Activated CD4-positive, alpha-beta T cell treated with anti-CD3 and anti-CD28 coated beads, Interleukin-2, amount 10 ng/mL, durations not matched to agents 24 days and 14 days (primary cell): ENCODE measurements at regions of chr19 and their contacts with region 1.

Region 1: DNA sequence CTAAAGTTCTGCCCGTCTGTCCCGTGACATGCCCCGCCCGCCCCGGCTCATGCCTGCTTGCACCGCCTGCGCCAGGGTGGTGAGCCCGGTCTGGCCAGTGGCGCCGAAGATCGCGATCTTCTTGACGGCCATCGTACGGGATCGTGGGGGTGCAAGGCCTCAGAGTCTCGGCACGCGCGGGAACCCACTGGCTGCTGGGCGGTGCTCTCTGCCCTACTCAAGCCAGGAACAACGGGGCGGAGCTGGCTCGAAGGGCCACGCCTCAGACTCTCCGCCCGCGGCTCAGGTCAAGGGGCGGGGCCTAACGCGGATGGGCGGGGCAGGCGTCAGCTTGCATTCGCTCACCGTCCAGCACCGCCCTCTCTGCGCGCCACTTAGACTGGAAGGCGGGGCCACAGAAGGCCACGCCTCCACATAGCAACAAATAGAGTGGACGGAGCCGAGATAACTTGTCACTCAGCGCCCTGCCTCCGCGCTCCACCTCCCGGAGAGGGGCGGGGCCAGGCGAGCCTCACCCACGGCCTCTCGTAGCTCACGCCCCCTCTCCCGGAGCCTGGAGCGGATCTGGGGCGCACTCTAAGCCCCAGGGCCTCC is at the start of gene BLVRB:
- DNase-seq: peak; percentile 100
- H3K4me3 Mint-ChIP-seq: peak within 1 kb of the TSS; percentile 96
- H3K27ac Mint-ChIP-seq: peak within 1 kb of the TSS; percentile 87
- H3K4me1 Mint-ChIP-seq: peaks cover 24% of the 10 kb centered on the region
- H3K27me3 Mint-ChIP-seq: peaks cover 23% of the 10 kb centered on the region
- total RNA-seq, gene BLVRB: 7.5 and 10.6 TPM in 2 replicates

Region 2: GRCh38 chr19:40378509-40378908 is 87.1 kb before region 1 on chr19:
- intact Hi-C with region 1: no loop called
- DNase-seq: no peak
- H3K4me3 Mint-ChIP-seq: no peak overlapping the region
- H3K27ac Mint-ChIP-seq: no peak overlapping the region
- H3K4me1 Mint-ChIP-seq: peaks cover 9% of the 10 kb centered on the region
- H3K27me3 Mint-ChIP-seq: no peaks in the 10 kb centered on the region

Region 3: GRCh38 chr19:40403262-40403984 is 62.2 kb before region 1 on chr19:
- intact Hi-C with region 1: loop called (anchors 1 kb)
- DNase-seq: peak; percentile 95
- H3K4me3 Mint-ChIP-seq: peak overlapping the region; percentile 88
- H3K27ac Mint-ChIP-seq: peak overlapping the region; percentile 80
- H3K4me1 Mint-ChIP-seq: peaks cover 23% of the 10 kb centered on the region
- H3K27me3 Mint-ChIP-seq: peaks cover 3% of the 10 kb centered on the region

Region 4: DNA sequence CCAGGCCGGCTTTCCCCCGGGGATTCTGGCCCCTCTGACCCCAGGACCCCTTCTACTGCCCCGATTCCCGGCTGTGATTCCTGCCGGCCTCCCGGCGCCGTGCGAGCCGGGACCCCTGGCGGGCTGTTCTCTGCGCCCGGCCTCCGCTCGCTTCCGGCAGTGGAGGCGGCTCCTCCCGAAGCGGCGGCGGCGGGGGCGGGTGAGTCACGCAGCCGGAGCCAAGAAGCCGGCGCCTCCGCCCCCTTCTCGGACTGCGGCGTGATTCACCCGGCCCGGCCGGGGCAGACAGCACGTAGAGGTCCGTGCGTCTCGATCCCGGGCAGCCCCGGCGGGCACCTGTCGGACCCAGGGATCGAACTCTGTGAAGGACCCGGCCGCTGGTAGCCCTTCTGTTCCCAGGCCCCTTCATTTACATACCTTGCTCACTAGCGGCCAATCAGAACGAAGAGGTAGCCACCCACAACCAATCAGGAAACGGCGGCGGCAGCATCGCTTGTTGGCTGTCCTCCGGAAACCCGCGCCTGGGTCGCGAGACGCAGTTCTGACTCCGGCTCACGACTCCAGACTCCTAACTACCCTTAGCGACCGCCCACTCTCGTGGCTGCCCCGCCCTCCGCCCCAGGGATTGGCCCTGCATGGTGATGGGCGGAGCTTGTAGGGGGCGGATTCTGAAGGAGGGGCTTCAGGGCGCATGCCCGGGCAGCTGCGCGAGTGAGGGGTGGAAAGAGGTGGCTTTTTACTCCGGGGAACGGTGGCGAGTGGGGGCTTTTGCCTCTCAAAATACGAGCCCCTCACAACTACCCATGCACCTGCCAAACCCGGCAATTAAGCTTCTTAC is 40.0 kb before region 1 on chr19 and contains the start of gene SERTAD1:
- intact Hi-C with region 1: loop called (anchors 1 kb)
- DNase-seq: peak; percentile 100
- H3K4me3 Mint-ChIP-seq: peak within 1 kb of the TSS; percentile 92
- H3K27ac Mint-ChIP-seq: peak within 1 kb of the TSS; percentile 91
- H3K4me1 Mint-ChIP-seq: peaks cover 26% of the 10 kb centered on the region
- H3K27me3 Mint-ChIP-seq: peaks cover 5% of the 10 kb centered on the region
- total RNA-seq, gene SERTAD1: 19.3 and 20.8 TPM in 2 replicates

Region 5: DNA sequence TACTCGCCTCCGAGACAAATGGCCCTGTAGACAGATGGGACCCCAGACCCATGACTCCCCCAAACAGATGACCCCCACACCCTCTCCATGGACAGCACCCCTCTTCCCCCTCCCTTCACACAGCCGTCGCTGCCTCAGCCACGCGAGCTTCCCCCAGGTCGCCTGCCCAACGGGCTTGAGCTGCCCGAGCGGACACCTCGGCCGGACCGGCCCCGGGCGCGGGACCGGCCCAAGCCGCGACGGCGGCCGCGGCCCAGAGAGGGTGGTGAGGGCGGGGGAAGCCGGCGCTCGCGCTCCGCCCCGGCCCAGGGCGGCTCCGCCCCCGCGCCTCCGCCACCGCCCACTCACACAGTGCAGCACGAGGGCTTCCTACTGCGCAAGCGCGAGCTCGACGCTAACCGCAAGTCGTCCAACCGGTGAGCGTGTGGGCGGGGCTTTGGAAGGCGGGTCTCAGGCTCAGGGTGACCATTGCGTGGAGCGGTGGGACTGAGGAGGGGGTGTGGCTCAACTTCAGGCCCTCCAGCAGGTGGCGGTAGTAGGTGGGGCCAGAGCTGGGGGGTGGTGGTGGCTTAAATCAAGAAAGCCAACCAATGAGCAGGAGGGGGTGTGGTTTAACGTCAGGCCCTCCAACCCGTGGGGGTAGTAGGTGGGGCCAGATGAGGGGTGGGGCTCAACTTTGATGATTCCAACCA is 104.8 kb after region 1 on chr19:
- intact Hi-C with region 1: loop called (anchors 1 kb)
- DNase-seq: peak; percentile 99
- H3K4me3 Mint-ChIP-seq: peak overlapping the region; percentile 63
- H3K27ac Mint-ChIP-seq: peak overlapping the region; percentile 60
- H3K4me1 Mint-ChIP-seq: peaks cover 9% of the 10 kb centered on the region
- H3K27me3 Mint-ChIP-seq: peaks cover 32% of the 10 kb centered on the region

Region 6: DNA sequence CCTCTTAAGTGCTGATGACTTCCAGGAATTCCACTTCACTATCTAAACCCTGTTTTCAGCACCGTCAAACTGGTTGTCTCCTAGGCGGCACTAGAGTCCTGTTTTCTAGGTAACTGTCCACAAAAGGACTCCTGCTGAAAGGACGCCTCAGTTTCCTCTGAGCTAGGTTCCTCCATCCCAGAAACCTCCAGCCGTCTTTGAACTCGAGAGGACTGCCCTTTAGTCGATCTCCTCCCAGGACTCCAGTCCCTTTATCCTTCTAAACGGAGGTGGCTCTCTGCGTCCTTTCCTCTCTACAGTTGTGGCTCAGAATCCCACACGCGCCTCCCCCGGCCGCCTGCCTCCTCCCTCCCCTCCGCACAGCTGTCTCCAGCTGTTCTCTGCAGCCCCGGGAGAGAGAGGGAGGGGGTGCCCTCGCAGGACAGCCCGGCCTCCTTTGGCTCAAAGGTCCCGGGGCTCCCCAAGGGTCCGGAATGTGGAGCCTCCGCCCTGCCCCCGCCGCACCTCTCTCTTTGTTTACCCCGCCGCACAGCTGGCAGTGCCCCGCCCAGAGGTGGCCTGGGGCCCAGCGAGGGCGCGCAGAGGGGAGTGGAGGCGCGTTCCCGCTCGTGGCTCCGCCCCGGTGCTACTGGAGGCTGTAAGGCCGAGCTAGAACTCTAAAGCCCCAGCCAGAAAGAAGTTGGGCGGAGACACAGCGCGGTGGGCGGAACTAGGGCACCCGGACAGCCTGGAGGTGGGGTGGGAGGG is 137.9 kb after region 1 on chr19:
- intact Hi-C with region 1: loop called (anchors 2 kb)
- DNase-seq: peak; percentile 99
- H3K4me3 Mint-ChIP-seq: peak overlapping the region; percentile 94
- H3K27ac Mint-ChIP-seq: peak overlapping the region; percentile 92
- H3K4me1 Mint-ChIP-seq: peaks cover 60% of the 10 kb centered on the region
- H3K27me3 Mint-ChIP-seq: peaks cover 27% of the 10 kb centered on the region